SK-N-SH (cell line): ENCODE measurements at regions of chr3 and their contacts with region 1.

Region 1: GRCh38 chr3:47522082-47522987 is 8.8 kb upstream of the ELP6 start:
- DNase-seq: peak; percentile 79
- H3K4me3 ChIP-seq: no peak overlapping the region; a peak in 1 of 4 replicates
- H3K27ac ChIP-seq: no peak overlapping the region
- H3K4me1 ChIP-seq: peaks cover 0 to 4% of the 10 kb centered on the region in 2 experiments; a peak in 1 of 4 replicates
- H3K27me3 ChIP-seq: no peaks in the 10 kb centered on the region
- CTCF ChIP-seq: peak; percentile 89
- EP300 ChIP-seq: no peak
- RAD21 ChIP-seq: peak; percentile 95

Region 2: DNA sequence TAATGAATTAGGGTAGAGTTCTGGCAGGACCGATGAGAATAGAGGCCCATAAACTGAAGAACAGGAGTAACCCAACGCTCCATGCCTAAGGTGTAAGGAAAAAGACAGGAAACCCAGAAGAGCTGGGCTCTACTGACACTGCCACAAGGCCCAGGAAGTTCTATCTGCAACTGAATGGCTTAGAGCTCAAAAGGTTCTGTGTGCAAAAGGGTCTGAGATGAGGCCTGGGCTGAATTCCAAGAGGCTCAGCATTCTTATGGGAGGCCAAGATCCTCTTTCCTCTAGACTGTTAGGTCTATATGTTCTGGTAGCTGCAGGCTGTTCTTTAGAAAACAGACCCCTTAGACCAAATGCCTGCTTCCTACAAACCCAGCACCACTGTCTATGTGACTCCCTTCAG is 774.2 kb before region 1 on chr3:
- CTCF ChIA-PET with region 1: no interaction called
- POLR2A ChIA-PET with region 1: no interaction called
- DNase-seq: no peak
- H3K4me3 ChIP-seq: no peak overlapping the region
- H3K27ac ChIP-seq: no peak overlapping the region
- H3K4me1 ChIP-seq: no peaks in the 10 kb centered on the region
- H3K27me3 ChIP-seq: no peaks in the 10 kb centered on the region
- CTCF ChIP-seq: no peak
- EP300 ChIP-seq: no peak
- RAD21 ChIP-seq: no peak

Region 3: GRCh38 chr3:47282424-47283192 is 239.7 kb before region 1 on chr3 and contains the starts of genes KIF9 and KLHL18:
- CTCF ChIA-PET with region 1: no interaction called
- POLR2A ChIA-PET with region 1: no interaction called
- DNase-seq: peak; percentile 94
- H3K4me3 ChIP-seq: peak within 1 kb of the TSS; percentile 70 to 78
- H3K27ac ChIP-seq: peak within 1 kb of the TSS; percentile 96 to 99
- H3K4me1 ChIP-seq: peaks cover 0 to 9% of the 10 kb centered on the region in 2 experiments; a peak in 1 of 4 replicates
- H3K27me3 ChIP-seq: no peaks in the 10 kb centered on the region
- CTCF ChIP-seq: no peak
- EP300 ChIP-seq: no peak
- RAD21 ChIP-seq: no peak
- polyA plus RNA-seq, gene KIF9: 23.9 and 31.8 TPM in 2 replicates
- polyA plus RNA-seq, gene KLHL18: 47.0 and 55.2 TPM in 2 replicates

Region 4: DNA sequence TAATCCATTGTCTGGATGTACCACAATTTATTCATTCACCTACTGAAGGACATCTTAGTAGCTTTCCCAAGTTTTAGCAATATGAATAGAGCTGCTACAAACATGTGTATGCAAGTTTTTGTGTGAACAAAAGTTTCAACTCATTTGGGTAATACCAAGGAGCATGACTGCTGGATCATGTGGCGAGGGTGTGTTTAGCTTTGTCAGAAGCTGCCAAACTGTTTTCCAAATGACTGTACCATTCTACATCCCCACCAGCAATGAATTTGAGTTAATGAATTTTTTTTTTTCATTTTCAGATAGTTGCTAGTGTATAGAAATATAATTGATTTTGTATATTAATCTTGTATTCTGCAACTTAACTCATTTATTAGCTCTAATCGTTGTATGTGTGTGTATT is 11.1 kb after region 1 on chr3:
- CTCF ChIA-PET with region 1: interaction called, 17 read pairs
- POLR2A ChIA-PET with region 1: no interaction called
- DNase-seq: no peak
- H3K4me3 ChIP-seq: no peak overlapping the region
- H3K27ac ChIP-seq: no peak overlapping the region
- H3K4me1 ChIP-seq: no peaks in the 10 kb centered on the region
- H3K27me3 ChIP-seq: no peaks in the 10 kb centered on the region
- CTCF ChIP-seq: no peak
- EP300 ChIP-seq: no peak
- RAD21 ChIP-seq: no peak

Region 5: GRCh38 chr3:47634996-47635395 is 112.7 kb after region 1 on chr3:
- CTCF ChIA-PET with region 1: no interaction called
- POLR2A ChIA-PET with region 1: no interaction called
- DNase-seq: no peak
- H3K4me3 ChIP-seq: no peak overlapping the region
- H3K27ac ChIP-seq: no peak overlapping the region
- H3K4me1 ChIP-seq: no peaks in the 10 kb centered on the region
- H3K27me3 ChIP-seq: no peaks in the 10 kb centered on the region
- CTCF ChIP-seq: no peak
- EP300 ChIP-seq: no peak
- RAD21 ChIP-seq: no peak

Region 6: GRCh38 chr3:47645570-47645969 is 123.2 kb after region 1 on chr3:
- CTCF ChIA-PET with region 1: no interaction called
- POLR2A ChIA-PET with region 1: no interaction called
- DNase-seq: no peak
- H3K4me3 ChIP-seq: no peak overlapping the region
- H3K27ac ChIP-seq: no peak overlapping the region
- H3K4me1 ChIP-seq: no peaks in the 10 kb centered on the region
- H3K27me3 ChIP-seq: no peaks in the 10 kb centered on the region
- CTCF ChIP-seq: no peak
- EP300 ChIP-seq: no peak
- RAD21 ChIP-seq: no peak

Region 7: DNA sequence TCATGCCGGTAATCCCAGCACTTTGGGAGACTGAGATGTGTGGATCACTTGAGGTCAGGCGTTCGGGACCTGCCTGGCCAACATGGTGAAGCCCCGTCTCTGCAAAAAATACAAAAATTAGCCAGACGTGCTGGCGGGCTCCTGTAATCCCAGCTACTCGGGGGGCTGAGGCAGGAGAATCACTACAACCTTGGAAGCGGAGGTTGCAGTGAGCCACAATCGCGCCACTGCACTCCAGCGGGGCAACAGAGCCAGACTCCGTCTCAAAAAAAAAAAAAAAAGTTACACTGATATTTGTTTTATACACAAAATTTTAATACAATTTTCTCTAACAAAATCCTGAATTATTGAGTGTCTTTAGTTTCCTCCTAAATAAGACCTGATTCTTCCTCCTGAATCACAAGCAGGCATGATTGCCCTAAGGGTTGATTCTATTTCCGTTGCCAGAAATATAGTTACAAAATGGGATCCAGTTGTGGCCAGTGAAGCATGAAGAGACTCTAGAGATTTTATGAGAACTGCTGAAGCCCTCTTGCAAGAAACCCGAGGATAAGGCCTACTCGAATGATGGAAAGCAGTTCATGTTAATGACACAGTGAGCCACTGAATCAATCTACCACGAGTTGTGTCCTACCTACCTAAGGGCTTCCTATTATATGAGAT is 269.0 kb after region 1 on chr3:
- CTCF ChIA-PET with region 1: interaction called, 64 read pairs
- POLR2A ChIA-PET with region 1: interaction called, 3 read pairs
- DNase-seq: no peak
- H3K4me3 ChIP-seq: no peak overlapping the region
- H3K27ac ChIP-seq: no peak overlapping the region
- H3K4me1 ChIP-seq: no peaks in the 10 kb centered on the region
- H3K27me3 ChIP-seq: no peaks in the 10 kb centered on the region
- CTCF ChIP-seq: no peak
- EP300 ChIP-seq: no peak
- RAD21 ChIP-seq: no peak

Region 8: GRCh38 chr3:47802734-47803477 is 280.6 kb after region 1 on chr3 and contains the start of gene DHX30:
- CTCF ChIA-PET with region 1: interaction called, 11 read pairs
- POLR2A ChIA-PET with region 1: interaction called, 5 read pairs
- DNase-seq: peak; percentile 94
- H3K4me3 ChIP-seq: peak within 1 kb of the TSS; percentile 66 to 100
- H3K27ac ChIP-seq: peak within 1 kb of the TSS; percentile 91 to 93
- H3K4me1 ChIP-seq: peaks cover 0 to 4% of the 10 kb centered on the region in 2 experiments; a peak in 2 of 4 replicates
- H3K27me3 ChIP-seq: no peaks in the 10 kb centered on the region
- CTCF ChIP-seq: no peak
- EP300 ChIP-seq: no peak
- RAD21 ChIP-seq: no peak
- polyA plus RNA-seq, gene DHX30: 86.3 and 90.4 TPM in 2 replicates